ENCODE measurements at regions of chr7 and their contacts with region 1.

Region 1: DNA sequence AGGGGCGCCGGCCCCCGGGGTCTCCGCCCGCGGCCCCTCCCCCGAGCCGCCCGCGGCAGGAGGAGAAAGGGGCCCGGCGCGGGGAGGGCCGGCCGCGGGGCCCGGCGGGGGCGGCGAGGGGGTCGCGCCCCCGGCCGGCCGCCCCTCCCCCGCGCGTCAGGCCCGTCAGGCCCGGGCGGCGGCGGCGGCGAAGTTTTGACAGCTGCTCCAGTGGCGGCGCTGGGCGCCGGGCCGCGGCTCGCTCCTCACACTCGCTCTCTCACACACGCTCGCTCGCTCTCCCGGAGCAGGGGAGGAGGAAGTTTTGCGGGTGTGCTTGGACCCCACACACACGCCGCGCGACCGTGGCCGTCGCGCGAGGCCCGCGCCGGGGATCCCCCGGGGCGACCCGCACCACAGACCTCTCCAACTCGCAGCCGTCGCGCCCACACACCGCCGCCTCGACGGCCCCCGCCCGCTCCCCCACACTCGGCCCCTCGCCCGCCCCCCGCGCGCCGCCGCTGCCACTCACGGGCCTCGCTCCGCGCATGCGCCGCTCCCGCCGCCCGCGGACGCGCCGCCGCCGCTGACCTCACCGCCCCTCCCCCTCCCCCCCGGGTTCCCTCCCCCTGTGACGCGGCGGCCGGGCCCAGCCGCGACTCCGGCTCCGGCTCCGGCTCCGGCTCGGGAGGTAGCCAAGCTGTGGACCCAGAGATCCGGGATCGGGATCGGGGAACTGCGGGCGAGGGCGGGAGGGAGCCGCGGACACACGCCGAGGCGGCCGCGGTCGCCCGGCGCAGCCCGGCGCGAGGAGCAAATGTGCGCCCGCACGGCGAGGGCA is 518 bp upstream of the KMT2C start:
- DNase-seq: peak; percentile 98
- H3K4me3 ChIP-seq: peak overlapping the region; percentile 62 to 100 (median 79)
- H3K27ac ChIP-seq: peak overlapping the region; percentile 95 to 100 (median 98)
- H3K4me1 ChIP-seq: peaks cover 3 to 33% (median 24%) of the 10 kb centered on the region in 4 donors
- H3K27me3 ChIP-seq: no peaks in the 10 kb centered on the region
- CTCF ChIP-seq: no peak
- EP300 ChIP-seq: no peak
- POLR2A ChIP-seq: no peak

Region 2: GRCh38 chr7:152313831-152314604 is 122.3 kb before region 1 on chr7:
- intact Hi-C with region 1: loop called (anchors 10 kb)
- DNase-seq: no peak
- H3K4me3 ChIP-seq: no peak overlapping the region
- H3K27ac ChIP-seq: peak overlapping the region in 2 of 4 donors; percentile 13 to 18
- H3K4me1 ChIP-seq: peaks cover 0 to 47% (median 26%) of the 10 kb centered on the region in 4 donors
- H3K27me3 ChIP-seq: no peaks in the 10 kb centered on the region
- CTCF ChIP-seq: no peak
- EP300 ChIP-seq: no peak
- POLR2A ChIP-seq: no peak

Region 3: GRCh38 chr7:152881893-152882292 is 445.6 kb after region 1 on chr7:
- intact Hi-C with region 1: no loop called
- DNase-seq: no peak
- H3K4me3 ChIP-seq: no peak overlapping the region
- H3K27ac ChIP-seq: no peak overlapping the region
- H3K4me1 ChIP-seq: no peaks in the 10 kb centered on the region
- H3K27me3 ChIP-seq: no peaks in the 10 kb centered on the region
- CTCF ChIP-seq: no peak
- EP300 ChIP-seq: no peak
- POLR2A ChIP-seq: no peak